CD4-positive, alpha-beta T cell (primary cell): ENCODE measurements at regions of chr22 and their contacts with region 1.

Region 1: GRCh38 chr22:37538590-37539357 is 19.6 kb upstream of the CARD10 start:
- DNase-seq: peak; percentile 82 to 95 (median 88)
- ATAC-seq: peak; percentile 100
- H3K4me3 ChIP-seq: no peak overlapping the region
- H3K4me3 Mint-ChIP-seq: no peak overlapping the region
- H3K27ac ChIP-seq: no peak overlapping the region
- H3K27ac Mint-ChIP-seq: no peak overlapping the region
- H3K4me1 ChIP-seq: peaks cover 38% of the 10 kb centered on the region
- H3K4me1 Mint-ChIP-seq: peaks cover 19% of the 10 kb centered on the region
- H3K27me3 ChIP-seq: peaks cover 4 to 5% of the 10 kb centered on the region in 2 experiments
- H3K27me3 Mint-ChIP-seq: peaks cover 33% of the 10 kb centered on the region
- CTCF ChIP-seq: peak; percentile 98

Region 2: DNA sequence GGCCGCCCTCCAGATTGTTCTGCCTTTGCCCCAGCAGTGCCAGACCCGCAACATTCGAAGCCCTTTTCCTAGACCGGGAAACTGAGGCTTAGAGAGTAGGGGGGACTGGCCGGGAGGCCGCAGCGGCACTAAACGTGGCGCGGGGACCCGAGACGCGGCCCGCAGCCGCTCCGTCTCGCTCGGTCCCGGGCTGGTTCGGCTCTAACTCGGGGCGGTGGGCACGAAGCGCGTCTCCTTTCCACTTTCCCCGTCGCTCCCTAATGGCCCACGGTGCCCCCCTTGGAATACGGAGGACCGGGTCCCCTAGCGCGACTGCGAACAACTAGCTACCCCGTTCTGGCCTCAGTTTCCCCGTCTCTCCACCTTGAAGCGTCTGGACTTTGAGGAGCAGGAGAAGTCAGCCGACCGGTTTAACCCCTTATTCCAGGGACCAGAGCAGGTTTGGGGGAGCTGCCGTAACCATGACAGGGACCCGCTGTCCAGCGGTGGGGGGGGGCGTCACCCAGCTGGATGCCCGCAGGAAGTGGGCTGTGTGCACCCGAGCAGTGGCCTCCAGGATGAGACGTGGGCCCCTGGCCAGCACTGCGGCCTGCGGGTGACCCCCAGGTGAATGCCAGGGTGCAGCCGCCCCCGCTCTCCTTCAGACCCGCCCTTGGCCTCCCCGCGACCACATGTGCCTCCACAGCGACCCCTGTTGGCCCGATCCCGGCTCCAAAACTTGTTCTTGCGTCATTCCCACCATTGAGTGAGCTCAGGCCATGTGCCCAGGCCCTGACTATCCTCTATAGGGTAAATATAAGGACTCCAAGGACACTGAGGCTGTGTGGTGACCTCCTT is 22.7 kb after region 1 on chr22:
- CTCF ChIA-PET with region 1: interaction called, 119 read pairs
- POLR2A ChIA-PET with region 1: interaction called, 29 read pairs
- intact Hi-C with region 1: no loop called
- DNase-seq: peak; percentile 61 to 85 (median 72)
- ATAC-seq: peak; percentile 69
- H3K4me3 ChIP-seq: peak overlapping the region; percentile 26
- H3K4me3 Mint-ChIP-seq: peak overlapping the region; percentile 78
- H3K27ac ChIP-seq: no peak overlapping the region
- H3K27ac Mint-ChIP-seq: no peak overlapping the region
- H3K4me1 ChIP-seq: peaks cover 33% of the 10 kb centered on the region
- H3K4me1 Mint-ChIP-seq: peaks cover 23% of the 10 kb centered on the region
- H3K27me3 ChIP-seq: peaks cover 29 to 45% of the 10 kb centered on the region in 2 experiments
- H3K27me3 Mint-ChIP-seq: peaks cover 66% of the 10 kb centered on the region
- CTCF ChIP-seq: peak; percentile 58

Region 3: DNA sequence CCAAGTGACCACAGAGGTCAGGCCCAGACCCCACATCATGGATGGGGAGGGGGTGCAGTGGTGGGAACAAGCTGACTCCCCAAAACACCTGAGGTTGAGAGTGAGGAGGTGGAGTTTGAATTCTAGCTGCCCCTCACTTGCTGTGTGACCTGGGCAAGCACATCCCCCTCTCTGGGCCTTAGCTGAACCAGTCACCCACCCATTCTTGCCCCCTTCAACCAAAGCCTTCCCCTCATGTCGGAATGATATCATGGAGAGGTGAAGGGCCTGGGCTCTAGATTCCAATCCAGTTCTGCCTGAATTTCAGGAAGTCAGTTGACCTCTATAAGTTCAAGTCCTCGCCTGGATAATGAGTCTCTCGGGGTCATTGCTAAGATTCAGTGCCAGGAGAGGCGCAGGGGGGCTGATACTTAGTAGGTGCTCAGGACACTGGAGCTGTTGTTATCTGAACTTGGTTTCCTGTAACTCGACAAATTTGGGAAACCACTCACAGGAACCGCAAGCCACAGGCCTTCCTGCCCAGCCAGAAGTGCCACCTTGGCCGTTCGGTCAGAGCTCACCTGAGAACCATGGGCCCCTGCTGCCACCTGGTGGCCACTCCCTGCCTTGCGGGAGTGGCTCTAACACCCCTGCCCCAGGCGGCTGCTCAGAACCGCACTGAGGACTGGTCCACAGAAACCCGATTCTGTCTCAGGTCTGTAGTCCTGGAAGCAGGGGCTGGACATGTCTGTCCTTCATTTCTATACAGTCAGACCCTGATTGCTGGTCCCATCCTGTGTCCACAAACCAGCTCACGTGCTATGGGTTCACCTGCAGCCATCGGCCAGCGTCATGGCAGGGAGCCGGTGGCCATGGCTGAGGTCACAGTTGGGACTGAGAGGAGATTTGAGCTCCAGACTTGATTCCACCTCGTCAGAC is 28.4 kb after region 1 on chr22:
- CTCF ChIA-PET with region 1: interaction called, 119 read pairs
- POLR2A ChIA-PET with region 1: interaction called, 29 read pairs
- intact Hi-C with region 1: loop called (anchors 1 kb)
- DNase-seq: peak; percentile 79 to 96 (median 89)
- ATAC-seq: peak; percentile 90
- H3K4me3 ChIP-seq: peak overlapping the region; percentile 22
- H3K4me3 Mint-ChIP-seq: peak overlapping the region; percentile 69
- H3K27ac ChIP-seq: no peak overlapping the region
- H3K27ac Mint-ChIP-seq: no peak overlapping the region
- H3K4me1 ChIP-seq: peaks cover 28% of the 10 kb centered on the region
- H3K4me1 Mint-ChIP-seq: peaks cover 29% of the 10 kb centered on the region
- H3K27me3 ChIP-seq: peaks cover 9 to 17% of the 10 kb centered on the region in 2 experiments
- H3K27me3 Mint-ChIP-seq: peaks cover 26% of the 10 kb centered on the region
- CTCF ChIP-seq: peak; percentile 92

Region 4: DNA sequence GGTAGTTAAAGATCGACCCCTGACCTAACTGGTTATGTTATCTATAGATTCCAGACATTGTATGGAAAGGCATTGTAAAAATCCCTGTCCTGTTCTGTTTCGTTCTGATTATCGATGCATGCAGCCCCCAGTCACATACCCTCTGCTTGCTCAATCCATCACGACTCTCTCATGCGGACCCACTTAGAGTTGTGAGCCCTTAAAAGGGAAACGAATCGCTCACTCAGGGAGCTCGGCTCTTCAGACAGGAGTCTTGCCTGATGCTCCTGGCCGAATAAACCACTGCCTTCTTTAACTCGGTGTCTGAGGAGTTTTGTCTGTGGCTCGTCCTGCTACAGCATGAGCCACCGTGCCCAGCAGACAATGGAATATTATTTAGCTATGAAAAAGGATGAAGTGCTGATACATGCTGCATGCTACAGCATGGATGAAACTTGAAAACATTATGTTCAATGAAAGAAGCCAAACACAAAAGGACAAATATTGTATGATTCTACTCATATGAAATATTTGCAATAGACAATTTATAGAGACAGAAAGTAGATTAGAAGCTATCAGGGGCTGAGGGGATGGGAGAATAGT is 53.1 kb after region 1 on chr22:
- CTCF ChIA-PET with region 1: interaction called, 29 read pairs
- POLR2A ChIA-PET with region 1: interaction called, 11 read pairs
- intact Hi-C with region 1: loop called (anchors 1 kb)
- DNase-seq: no peak
- ATAC-seq: no peak
- H3K4me3 ChIP-seq: peak overlapping the region; percentile 24
- H3K4me3 Mint-ChIP-seq: peak overlapping the region; percentile 73
- H3K27ac ChIP-seq: peak overlapping the region in 1 of 2 donors; percentile 31
- H3K27ac Mint-ChIP-seq: peak overlapping the region; percentile 60
- H3K4me1 ChIP-seq: peaks cover 17% of the 10 kb centered on the region
- H3K4me1 Mint-ChIP-seq: peaks cover 13% of the 10 kb centered on the region
- H3K27me3 ChIP-seq: no peaks in the 10 kb centered on the region
- H3K27me3 Mint-ChIP-seq: no peaks in the 10 kb centered on the region
- CTCF ChIP-seq: no peak

Region 5: GRCh38 chr22:37777122-37777687 is 238.4 kb after region 1 on chr22:
- CTCF ChIA-PET with region 1: no interaction called
- POLR2A ChIA-PET with region 1: no interaction called
- intact Hi-C with region 1: no loop called
- DNase-seq: no peak
- ATAC-seq: no peak
- H3K4me3 ChIP-seq: no peak overlapping the region
- H3K4me3 Mint-ChIP-seq: no peak overlapping the region
- H3K27ac ChIP-seq: no peak overlapping the region
- H3K27ac Mint-ChIP-seq: no peak overlapping the region
- H3K4me1 ChIP-seq: no peaks in the 10 kb centered on the region
- H3K4me1 Mint-ChIP-seq: no peaks in the 10 kb centered on the region
- H3K27me3 ChIP-seq: no peaks in the 10 kb centered on the region
- H3K27me3 Mint-ChIP-seq: no peaks in the 10 kb centered on the region
- CTCF ChIP-seq: no peak

Region 6: DNA sequence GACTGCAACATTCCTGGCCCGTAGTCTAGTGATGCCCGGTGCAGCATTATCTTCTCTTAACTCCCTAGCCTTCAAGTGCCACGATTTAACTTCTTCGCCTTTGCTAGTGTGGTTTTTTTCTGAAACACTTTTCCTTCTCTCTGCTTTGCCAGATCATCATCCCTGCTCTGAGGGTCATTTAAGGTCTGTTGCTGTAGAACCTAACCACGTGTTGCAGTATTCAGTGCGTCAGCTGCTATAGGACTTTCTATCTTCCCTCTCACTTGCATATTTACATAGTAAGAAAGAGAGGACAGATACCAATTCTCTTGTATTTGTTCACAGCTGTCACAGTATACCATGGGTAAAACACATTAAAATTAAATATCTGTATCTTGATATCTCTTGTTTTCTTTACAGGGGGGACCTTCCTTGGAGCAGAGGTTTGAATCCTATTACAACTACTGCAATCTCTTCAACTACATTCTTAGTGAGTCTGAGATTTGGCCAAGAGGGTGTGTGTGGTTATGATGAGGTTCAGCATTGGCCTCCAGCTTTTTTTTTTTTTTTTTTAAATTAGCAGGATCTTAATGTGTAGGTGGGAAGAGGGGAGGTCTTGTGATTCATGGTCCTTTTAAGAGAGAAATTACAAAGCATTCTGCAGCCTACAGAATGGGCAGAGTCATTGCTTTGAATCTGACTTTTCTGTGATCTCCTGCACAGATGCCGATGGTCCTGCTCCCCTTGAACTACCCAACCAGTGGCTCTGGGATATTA is 324.0 kb after region 1 on chr22:
- CTCF ChIA-PET with region 1: no interaction called
- POLR2A ChIA-PET with region 1: no interaction called
- intact Hi-C with region 1: loop called in 1 of 2 experiments (anchors 2 kb)
- DNase-seq: no peak
- ATAC-seq: no peak
- H3K4me3 ChIP-seq: no peak overlapping the region
- H3K4me3 Mint-ChIP-seq: no peak overlapping the region
- H3K27ac ChIP-seq: no peak overlapping the region
- H3K27ac Mint-ChIP-seq: no peak overlapping the region
- H3K4me1 ChIP-seq: peaks cover 3% of the 10 kb centered on the region
- H3K4me1 Mint-ChIP-seq: peaks cover 7% of the 10 kb centered on the region
- H3K27me3 ChIP-seq: no peaks in the 10 kb centered on the region
- H3K27me3 Mint-ChIP-seq: no peaks in the 10 kb centered on the region
- CTCF ChIP-seq: no peak

Region 7: DNA sequence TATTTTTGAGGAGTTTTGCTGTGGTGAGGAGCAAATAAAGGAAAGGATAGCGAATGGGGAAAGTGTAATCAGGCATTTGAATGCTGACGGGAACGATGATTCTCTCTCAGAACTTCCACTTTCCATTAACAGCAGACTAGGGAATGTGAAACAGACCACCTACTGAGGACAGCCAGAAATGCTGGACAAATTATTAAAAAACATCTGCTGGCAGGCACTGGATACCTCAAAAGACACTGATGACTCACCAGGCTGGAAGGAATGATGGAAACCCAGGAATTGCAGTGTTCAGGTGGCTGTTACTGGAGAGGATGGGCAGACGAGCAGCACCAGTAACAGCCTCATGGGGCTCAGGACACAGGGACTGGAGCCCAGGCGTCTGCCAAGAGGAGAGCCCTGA is 609.5 kb after region 1 on chr22:
- CTCF ChIA-PET with region 1: no interaction called
- POLR2A ChIA-PET with region 1: no interaction called
- intact Hi-C with region 1: no loop called
- DNase-seq: no peak
- ATAC-seq: no peak
- H3K4me3 ChIP-seq: no peak overlapping the region
- H3K4me3 Mint-ChIP-seq: no peak overlapping the region
- H3K27ac ChIP-seq: no peak overlapping the region
- H3K27ac Mint-ChIP-seq: no peak overlapping the region
- H3K4me1 ChIP-seq: peaks cover 21% of the 10 kb centered on the region
- H3K4me1 Mint-ChIP-seq: peaks cover 20% of the 10 kb centered on the region
- H3K27me3 ChIP-seq: no peaks in the 10 kb centered on the region
- H3K27me3 Mint-ChIP-seq: no peaks in the 10 kb centered on the region
- CTCF ChIP-seq: no peak